GM12878 (cell line): ENCODE measurements at regions of chr2 and their contacts with region 1.

Region 1: GRCh38 chr2:216379977-216380376 is 7.7 kb upstream of the MARCHF4 start:
- DNase-seq: no peak
- ATAC-seq: no peak
- H3K4me3 ChIP-seq: no peak overlapping the region
- H3K27ac ChIP-seq: no peak overlapping the region
- H3K4me1 ChIP-seq: no peaks in the 10 kb centered on the region
- H3K27me3 ChIP-seq: no peaks in the 10 kb centered on the region
- CTCF ChIP-seq: no peak
- EP300 ChIP-seq: no peak
- POLR2A ChIP-seq: no peak
- RAD21 ChIP-seq: no peak

Region 2: GRCh38 chr2:216298723-216299495 is 81.1 kb before region 1 on chr2:
- CTCF ChIA-PET with region 1: no interaction called
- POLR2A ChIA-PET with region 1: no interaction called
- RAD21 ChIA-PET with region 1: no interaction called
- SMC1A ChIA-PET with region 1: no interaction called
- in situ Hi-C with region 1: no loop called
- intact Hi-C with region 1: no loop called
- DNase-seq: no peak
- ATAC-seq: no peak
- H3K4me3 ChIP-seq: no peak overlapping the region
- H3K27ac ChIP-seq: no peak overlapping the region
- H3K4me1 ChIP-seq: no peaks in the 10 kb centered on the region
- H3K27me3 ChIP-seq: peaks cover 2 to 3% of the 10 kb centered on the region in 2 experiments; a peak in 1 of 4 replicates
- CTCF ChIP-seq: no peak
- EP300 ChIP-seq: no peak
- POLR2A ChIP-seq: no peak
- RAD21 ChIP-seq: no peak

Region 3: DNA sequence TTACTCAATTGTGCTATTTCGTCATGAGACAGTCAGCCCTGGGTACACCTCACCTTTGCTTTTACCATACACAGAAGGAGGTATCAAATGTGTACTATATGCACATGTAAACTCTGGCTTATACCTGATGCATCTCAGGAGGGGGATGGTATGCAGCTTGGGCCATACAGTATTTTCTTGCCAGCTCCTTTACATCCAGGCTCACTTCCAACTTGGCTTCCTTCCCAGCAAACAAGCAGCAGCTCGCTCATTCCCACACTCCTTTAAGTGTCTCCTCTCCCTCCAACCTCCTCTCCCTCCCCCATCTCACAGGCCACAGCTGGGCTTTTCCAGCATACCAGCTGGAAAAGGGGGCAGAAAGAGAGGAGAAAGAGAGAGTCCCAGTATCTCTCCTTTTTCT is 17.2 kb before region 1 on chr2:
- CTCF ChIA-PET with region 1: interaction called, 3 read pairs
- POLR2A ChIA-PET with region 1: no interaction called
- RAD21 ChIA-PET with region 1: no interaction called
- SMC1A ChIA-PET with region 1: no interaction called
- in situ Hi-C with region 1: no loop called
- intact Hi-C with region 1: loop called (anchors 1 kb)
- DNase-seq: no peak
- ATAC-seq: no peak
- H3K4me3 ChIP-seq: no peak overlapping the region
- H3K27ac ChIP-seq: no peak overlapping the region
- H3K4me1 ChIP-seq: no peaks in the 10 kb centered on the region
- H3K27me3 ChIP-seq: peaks cover 5 to 6% of the 10 kb centered on the region in 2 experiments
- CTCF ChIP-seq: no peak
- EP300 ChIP-seq: no peak
- POLR2A ChIP-seq: no peak
- RAD21 ChIP-seq: no peak